Psoas muscle (tissue), 8 donors: ENCODE measurements at regions of chr1 and their contacts with region 1.

Region 1: DNA sequence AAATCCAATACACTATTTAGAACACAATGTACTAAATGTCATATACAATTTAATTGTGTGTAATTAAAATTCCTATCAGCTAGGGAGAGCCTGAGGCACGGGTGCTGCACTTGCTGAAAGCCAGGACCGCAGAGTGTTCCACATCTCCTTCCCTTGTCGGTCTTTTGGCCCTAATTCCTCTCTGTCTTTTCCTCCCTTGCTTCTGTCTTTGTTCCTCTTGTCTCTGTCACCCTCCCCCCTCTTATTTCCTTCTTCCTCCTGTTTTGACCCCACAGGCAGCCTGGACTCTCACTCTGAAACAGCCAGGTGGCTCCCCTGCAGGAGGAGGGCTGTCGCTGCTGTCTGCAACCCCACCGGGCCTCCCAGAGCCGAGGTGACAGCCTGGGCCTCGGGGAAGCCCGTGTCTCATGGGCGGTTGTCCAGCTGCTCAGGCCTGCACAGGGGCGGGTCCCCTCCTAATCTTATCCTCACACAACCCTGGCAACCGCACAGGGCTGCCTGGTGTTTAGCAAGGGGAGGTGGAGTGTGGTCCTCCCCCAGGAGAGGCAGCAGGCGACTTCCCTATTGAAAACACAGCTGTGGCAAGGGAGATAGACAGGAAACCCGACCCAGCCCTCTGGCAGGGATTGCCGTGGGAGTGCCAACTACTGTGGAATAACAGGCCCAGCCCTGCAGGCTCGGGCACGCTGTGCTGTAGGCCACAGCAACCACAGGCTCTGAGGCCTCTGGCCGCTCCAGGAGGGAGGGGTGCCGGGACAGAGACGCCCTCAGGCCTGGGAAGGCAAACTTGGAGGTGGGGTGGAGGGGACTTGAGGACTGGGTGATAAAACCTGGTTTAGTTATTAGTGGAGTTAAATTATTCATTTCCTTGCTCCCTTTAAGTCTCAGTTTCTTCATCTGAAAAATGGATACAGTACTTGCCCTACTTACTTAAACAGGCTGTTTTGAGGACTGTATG is 68.8 kb upstream of the WDR26 start:
- DNase-seq: peak; percentile 88 to 96
- ATAC-seq: peak; percentile 90 to 94 (median 92)
- H3K4me3 ChIP-seq: peak overlapping the region; percentile 39
- H3K27ac ChIP-seq: peak overlapping the region; percentile 79
- H3K4me1 ChIP-seq: peaks cover 49% of the 10 kb centered on the region
- H3K27me3 ChIP-seq: no peaks in the 10 kb centered on the region
- CTCF ChIP-seq: peak; percentile 19

Region 2: DNA sequence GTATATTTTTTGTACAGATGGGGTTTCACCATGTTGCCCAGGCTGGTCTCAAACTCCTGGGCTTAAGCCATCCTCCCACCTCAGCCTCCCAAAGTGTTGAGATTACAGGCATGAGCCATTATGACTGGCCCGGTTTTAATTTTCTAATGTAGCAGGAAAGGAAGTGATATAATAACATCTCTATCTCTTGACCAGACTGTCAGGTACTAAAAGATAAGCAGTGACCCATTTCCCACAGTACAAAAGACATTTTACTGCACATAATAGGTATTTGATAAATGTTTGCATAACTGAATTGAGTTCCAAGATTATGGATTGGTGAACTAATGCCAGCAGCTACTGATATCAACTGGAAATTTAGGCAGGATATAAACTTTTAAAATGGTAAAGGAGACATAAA is 177.5 kb before region 1 on chr1:
- intact Hi-C with region 1: no loop called
- DNase-seq: no peak
- ATAC-seq: no peak
- H3K4me3 ChIP-seq: no peak overlapping the region
- H3K27ac ChIP-seq: no peak overlapping the region
- H3K4me1 ChIP-seq: peaks cover 7% of the 10 kb centered on the region
- H3K27me3 ChIP-seq: no peaks in the 10 kb centered on the region
- CTCF ChIP-seq: no peak

Region 3: GRCh38 chr1:224459966-224460365 is 43.5 kb before region 1 on chr1:
- intact Hi-C with region 1: no loop called
- DNase-seq: no peak
- ATAC-seq: no peak
- H3K4me3 ChIP-seq: no peak overlapping the region
- H3K27ac ChIP-seq: no peak overlapping the region
- H3K4me1 ChIP-seq: peaks cover 7% of the 10 kb centered on the region
- H3K27me3 ChIP-seq: no peaks in the 10 kb centered on the region
- CTCF ChIP-seq: no peak

Region 4: GRCh38 chr1:224528900-224529299 is 25.5 kb after region 1 on chr1:
- intact Hi-C with region 1: no loop called
- DNase-seq: no peak
- ATAC-seq: peak in 2 of 4 donors; percentile 60 to 73
- H3K4me3 ChIP-seq: no peak overlapping the region
- H3K27ac ChIP-seq: no peak overlapping the region
- H3K4me1 ChIP-seq: peaks cover 4% of the 10 kb centered on the region
- H3K27me3 ChIP-seq: no peaks in the 10 kb centered on the region
- CTCF ChIP-seq: no peak

Region 5: DNA sequence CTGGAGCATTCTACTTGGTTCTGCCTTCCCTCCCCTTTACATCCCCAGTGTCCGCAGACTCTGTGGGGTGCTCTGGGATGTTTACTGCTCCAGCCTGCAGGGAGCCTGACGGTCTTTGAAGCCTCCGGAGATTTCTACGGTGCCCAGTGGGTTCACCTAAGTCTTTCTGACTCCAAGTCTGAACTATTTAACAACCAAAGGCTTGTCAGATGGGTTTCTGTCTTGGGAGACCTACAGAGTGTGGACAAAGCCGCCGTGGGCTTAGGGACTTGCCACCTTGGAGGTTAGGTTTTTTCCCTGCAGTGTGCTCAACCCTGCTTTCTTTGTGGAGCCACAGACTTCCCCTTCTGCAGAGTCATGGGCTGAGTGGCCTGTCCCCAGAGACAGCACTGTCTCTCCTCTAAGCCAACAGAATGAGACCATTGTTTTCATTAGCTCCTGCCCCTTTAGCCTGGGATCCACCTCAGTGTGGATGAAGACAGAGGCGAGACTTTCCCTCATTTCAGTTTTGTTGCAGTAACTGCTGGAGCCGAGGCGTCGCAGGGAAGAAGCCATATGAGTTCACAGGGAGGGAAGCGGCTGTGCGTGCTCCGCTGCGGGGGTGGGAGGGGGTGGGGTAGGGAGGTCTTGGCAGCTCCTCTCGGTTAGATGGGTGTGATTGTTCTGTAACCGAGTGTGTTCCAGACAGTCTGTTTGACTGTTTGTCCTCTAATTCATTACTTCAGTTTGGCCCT is 233.3 kb after region 1 on chr1:
- intact Hi-C with region 1: loop called in 1 of 2 experiments (anchors 10 kb)
- DNase-seq: peak in 1 of 2 donors; percentile 40
- ATAC-seq: peak in 2 of 4 donors; percentile 19 to 21
- H3K4me3 ChIP-seq: no peak overlapping the region
- H3K27ac ChIP-seq: no peak overlapping the region
- H3K4me1 ChIP-seq: peaks cover 32% of the 10 kb centered on the region
- H3K27me3 ChIP-seq: no peaks in the 10 kb centered on the region
- CTCF ChIP-seq: no peak